HEK293 (cell line): ENCODE measurements at regions of chr14 and their contacts with region 1.

Region 1: GRCh38 chr14:35944847-35945246 is 118.7 kb downstream of the BRMS1L start:
- H3K4me3 ChIP-seq: no peak overlapping the region
- H3K27ac ChIP-seq: no peak overlapping the region
- H3K4me1 ChIP-seq: no peaks in the 10 kb centered on the region; the same call in 1 of the 2 replicates
- CTCF ChIP-seq: no peak

Region 2: DNA sequence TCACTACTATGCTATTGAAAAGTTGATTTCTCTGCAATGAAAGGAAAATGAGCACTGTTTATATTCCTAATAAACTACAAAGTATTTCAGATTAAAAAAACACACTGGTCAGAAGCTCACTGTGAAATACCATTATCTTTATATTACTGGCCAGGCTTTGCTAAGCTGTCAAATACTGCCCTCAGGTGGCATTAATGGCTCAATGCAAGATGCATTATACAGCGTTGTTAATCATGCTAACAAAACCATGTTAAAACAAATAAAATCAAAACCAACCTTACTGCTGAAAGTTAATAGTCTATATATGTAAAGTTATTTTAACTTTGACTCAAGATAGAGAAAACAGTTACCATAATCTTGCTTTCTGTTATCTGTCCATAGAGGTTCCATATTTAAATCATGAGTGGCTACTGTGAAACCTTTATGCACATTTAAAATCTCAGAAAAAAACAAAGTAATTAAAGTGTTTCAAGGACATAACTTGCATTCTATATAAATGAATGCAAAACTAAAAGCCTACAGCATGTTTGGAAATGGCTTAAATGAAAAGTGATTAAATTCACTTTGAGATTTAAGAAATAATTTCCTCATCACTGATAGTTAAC is 257.4 kb before region 1 on chr14:
- CTCF ChIA-PET with region 1: no interaction called
- POLR2A ChIA-PET with region 1: no interaction called
- H3K4me3 ChIP-seq: no peak overlapping the region
- H3K27ac ChIP-seq: no peak overlapping the region
- H3K4me1 ChIP-seq: no peaks in the 10 kb centered on the region
- CTCF ChIP-seq: peak; percentile 54

Region 3: DNA sequence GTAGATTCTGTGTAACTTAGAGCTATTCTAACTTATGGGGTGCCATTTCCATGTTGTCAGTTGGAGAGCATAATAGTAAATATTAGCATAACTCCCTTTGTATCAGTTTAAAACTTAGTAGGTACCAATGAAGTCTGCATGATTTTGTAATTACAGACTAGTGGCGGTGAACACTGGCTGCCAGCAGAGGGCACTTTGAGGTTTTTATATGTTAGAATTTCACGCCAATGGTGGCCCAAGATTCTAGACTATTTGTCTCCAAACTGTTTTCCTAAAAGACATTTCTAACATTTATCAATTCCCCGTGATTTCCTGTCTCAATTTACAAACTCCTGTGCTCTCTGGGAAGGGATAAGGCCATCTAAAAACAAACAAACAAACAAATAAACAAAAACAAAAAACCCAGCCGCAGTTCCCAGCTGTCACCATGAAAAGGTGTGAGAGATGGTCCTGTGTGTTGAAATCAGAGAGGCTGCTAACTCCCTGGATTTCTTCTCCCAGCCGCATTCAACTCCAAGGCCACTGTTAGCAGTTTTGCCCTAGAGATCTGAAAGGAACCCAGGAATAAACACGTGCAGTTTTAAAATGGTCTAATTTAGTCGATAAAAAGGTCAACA is 61.1 kb before region 1 on chr14:
- CTCF ChIA-PET with region 1: interaction called, 16 read pairs
- POLR2A ChIA-PET with region 1: no interaction called
- H3K4me3 ChIP-seq: no peak overlapping the region
- H3K27ac ChIP-seq: no peak overlapping the region
- H3K4me1 ChIP-seq: no peaks in the 10 kb centered on the region
- CTCF ChIP-seq: no peak

Region 4: GRCh38 chr14:36161776-36162175 is 216.9 kb after region 1 on chr14:
- CTCF ChIA-PET with region 1: no interaction called
- POLR2A ChIA-PET with region 1: no interaction called
- H3K4me3 ChIP-seq: no peak overlapping the region
- H3K27ac ChIP-seq: no peak overlapping the region
- H3K4me1 ChIP-seq: no peaks in the 10 kb centered on the region
- CTCF ChIP-seq: no peak

Region 5: GRCh38 chr14:36207500-36207899 is 262.7 kb after region 1 on chr14:
- CTCF ChIA-PET with region 1: no interaction called
- POLR2A ChIA-PET with region 1: no interaction called
- H3K4me3 ChIP-seq: no peak overlapping the region
- H3K27ac ChIP-seq: no peak overlapping the region
- H3K4me1 ChIP-seq: no peaks in the 10 kb centered on the region
- CTCF ChIP-seq: 0 out of 2 replicates have a peak, but pooled peaks have one; percentile 17

Region 6: GRCh38 chr14:36268121-36268520 is 323.3 kb after region 1 on chr14:
- CTCF ChIA-PET with region 1: no interaction called
- POLR2A ChIA-PET with region 1: no interaction called
- H3K4me3 ChIP-seq: no peak overlapping the region
- H3K27ac ChIP-seq: no peak overlapping the region; the same call in 1 of the 2 replicates
- H3K4me1 ChIP-seq: peaks cover 15% of the 10 kb centered on the region
- CTCF ChIP-seq: no peak